ENCODE measurements at regions of chr1 and their contacts with region 1.

Region 1: GRCh38 chr1:45686317-45687013 is at the start of gene GPBP1L1:
- DNase-seq: peak; percentile 99
- H3K4me3 Mint-ChIP-seq: peak within 1 kb of the TSS; percentile 99
- H3K27ac Mint-ChIP-seq: peak within 1 kb of the TSS; percentile 99
- H3K4me1 Mint-ChIP-seq: peaks cover 50% of the 10 kb centered on the region
- H3K27me3 Mint-ChIP-seq: no peaks in the 10 kb centered on the region
- total RNA-seq, gene GPBP1L1: 106 TPM

Region 2: GRCh38 chr1:45303582-45304310 is 382.7 kb before region 1 on chr1:
- CTCF ChIA-PET with region 1: no interaction called
- POLR2A ChIA-PET with region 1: no interaction called
- intact Hi-C with region 1: loop called (anchors 2 kb)
- DNase-seq: peak; percentile 100
- H3K4me3 Mint-ChIP-seq: peak overlapping the region; percentile 89
- H3K27ac Mint-ChIP-seq: peak overlapping the region; percentile 96
- H3K4me1 Mint-ChIP-seq: peaks cover 29% of the 10 kb centered on the region
- H3K27me3 Mint-ChIP-seq: no peaks in the 10 kb centered on the region

Region 3: DNA sequence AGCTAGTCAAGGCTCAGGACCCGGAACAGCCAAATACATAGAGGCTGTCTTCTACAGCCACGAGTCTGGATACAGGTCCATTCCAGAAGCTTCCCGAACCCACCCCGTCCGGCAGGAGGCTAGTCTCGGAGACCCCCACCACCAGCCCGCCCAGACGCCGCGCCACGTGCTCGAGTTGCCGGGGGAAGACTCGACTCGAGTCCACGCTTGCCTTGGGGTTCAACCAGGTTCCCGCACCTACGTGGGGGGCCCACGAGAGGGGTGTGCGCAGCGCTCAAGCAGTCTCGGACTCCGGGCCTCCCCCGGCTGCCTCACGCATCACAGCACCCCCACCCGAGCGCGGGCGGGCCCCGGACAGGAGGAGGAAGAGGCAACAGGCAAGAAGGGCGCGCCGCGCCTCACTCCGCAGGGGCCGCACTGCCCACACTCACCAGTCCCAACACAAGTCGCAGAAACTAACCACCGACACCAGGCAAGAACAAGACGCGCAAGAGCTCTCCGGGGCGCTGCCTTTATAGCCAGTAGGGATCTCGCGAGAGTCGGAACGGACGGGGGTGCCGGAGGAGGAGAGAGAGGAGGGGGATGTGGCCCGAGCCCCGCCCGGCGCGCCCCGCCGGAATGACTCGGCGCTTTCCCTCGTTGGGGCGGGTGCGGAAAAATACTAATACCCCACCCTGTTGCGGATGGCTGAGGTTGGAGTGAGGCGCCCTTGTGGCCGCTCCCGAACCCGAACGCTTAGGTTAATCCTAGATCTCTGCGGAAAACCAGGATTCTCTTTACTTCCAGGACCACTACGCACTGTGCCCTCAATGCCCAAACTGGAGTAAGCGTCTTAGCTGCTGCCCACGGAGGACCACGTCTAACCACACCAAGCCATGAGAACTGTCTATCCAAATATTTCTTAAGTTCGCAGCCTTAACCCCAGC is 164.8 kb before region 1 on chr1 and contains the start of gene PRDX1:
- CTCF ChIA-PET with region 1: no interaction called
- POLR2A ChIA-PET with region 1: interaction called, 6 read pairs
- intact Hi-C with region 1: loop called (anchors 2 kb)
- DNase-seq: peak; percentile 98
- H3K4me3 Mint-ChIP-seq: peak within 1 kb of the TSS; percentile 94
- H3K27ac Mint-ChIP-seq: peak within 1 kb of the TSS; percentile 94
- H3K4me1 Mint-ChIP-seq: peaks cover 43% of the 10 kb centered on the region
- H3K27me3 Mint-ChIP-seq: peaks cover 1% of the 10 kb centered on the region
- total RNA-seq, gene PRDX1: 479 to 481 TPM

Region 4: GRCh38 chr1:45730475-45731339 is 44.2 kb after region 1 on chr1:
- CTCF ChIA-PET with region 1: no interaction called
- POLR2A ChIA-PET with region 1: no interaction called
- intact Hi-C with region 1: no loop called
- DNase-seq: no peak
- H3K4me3 Mint-ChIP-seq: no peak overlapping the region
- H3K27ac Mint-ChIP-seq: no peak overlapping the region
- H3K4me1 Mint-ChIP-seq: peaks cover 9% of the 10 kb centered on the region
- H3K27me3 Mint-ChIP-seq: no peaks in the 10 kb centered on the region

Region 5: DNA sequence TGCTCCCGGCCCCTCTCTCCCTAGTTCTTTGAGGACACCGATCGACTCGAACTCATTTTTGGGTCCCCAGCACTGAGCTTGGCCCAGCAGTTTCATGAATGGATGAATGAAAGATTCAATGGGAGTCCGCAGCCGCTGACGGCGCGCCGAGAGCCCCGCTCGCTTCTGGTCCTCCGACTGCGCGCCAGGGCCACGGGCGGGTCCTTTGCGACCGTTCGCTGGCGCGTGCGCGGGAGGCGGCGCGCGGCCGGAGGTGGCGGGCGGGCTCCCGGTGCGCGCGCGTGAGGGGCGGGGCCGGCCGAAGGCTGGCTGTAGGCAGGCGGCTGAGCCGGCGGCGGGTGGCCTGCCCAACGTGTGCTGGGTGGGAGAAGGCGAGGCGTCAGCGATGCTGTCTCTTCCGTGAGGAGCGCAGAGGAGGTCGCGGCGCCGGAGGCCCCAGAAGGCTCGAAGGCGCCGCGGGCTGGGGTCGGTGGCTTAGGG is 116.9 kb after region 1 on chr1 and contains the start of gene MAST2:
- CTCF ChIA-PET with region 1: interaction called, 3 read pairs
- POLR2A ChIA-PET with region 1: no interaction called
- intact Hi-C with region 1: loop called (anchors 2 kb)
- DNase-seq: peak; percentile 90
- H3K4me3 Mint-ChIP-seq: peak within 1 kb of the TSS; percentile 86
- H3K27ac Mint-ChIP-seq: peak within 1 kb of the TSS; percentile 61
- H3K4me1 Mint-ChIP-seq: peaks cover 25% of the 10 kb centered on the region
- H3K27me3 Mint-ChIP-seq: no peaks in the 10 kb centered on the region
- total RNA-seq, gene MAST2: 25.1 to 26.6 TPM

Region 6: GRCh38 chr1:46179138-46180081 is 492.9 kb after region 1 on chr1:
- CTCF ChIA-PET with region 1: no interaction called
- POLR2A ChIA-PET with region 1: no interaction called
- intact Hi-C with region 1: loop called (anchors 10 kb)
- DNase-seq: peak; percentile 75
- H3K4me3 Mint-ChIP-seq: no peak overlapping the region
- H3K27ac Mint-ChIP-seq: no peak overlapping the region
- H3K4me1 Mint-ChIP-seq: peaks cover 6% of the 10 kb centered on the region
- H3K27me3 Mint-ChIP-seq: no peaks in the 10 kb centered on the region

Measured in activated CD4-positive, alpha-beta memory T cell treated with anti-CD3 and anti-CD28 coated beads for 36 hours (primary cell).